Testis (tissue), 5 donors: ENCODE measurements at regions of chr12 and their contacts with region 1.

Region 1: DNA sequence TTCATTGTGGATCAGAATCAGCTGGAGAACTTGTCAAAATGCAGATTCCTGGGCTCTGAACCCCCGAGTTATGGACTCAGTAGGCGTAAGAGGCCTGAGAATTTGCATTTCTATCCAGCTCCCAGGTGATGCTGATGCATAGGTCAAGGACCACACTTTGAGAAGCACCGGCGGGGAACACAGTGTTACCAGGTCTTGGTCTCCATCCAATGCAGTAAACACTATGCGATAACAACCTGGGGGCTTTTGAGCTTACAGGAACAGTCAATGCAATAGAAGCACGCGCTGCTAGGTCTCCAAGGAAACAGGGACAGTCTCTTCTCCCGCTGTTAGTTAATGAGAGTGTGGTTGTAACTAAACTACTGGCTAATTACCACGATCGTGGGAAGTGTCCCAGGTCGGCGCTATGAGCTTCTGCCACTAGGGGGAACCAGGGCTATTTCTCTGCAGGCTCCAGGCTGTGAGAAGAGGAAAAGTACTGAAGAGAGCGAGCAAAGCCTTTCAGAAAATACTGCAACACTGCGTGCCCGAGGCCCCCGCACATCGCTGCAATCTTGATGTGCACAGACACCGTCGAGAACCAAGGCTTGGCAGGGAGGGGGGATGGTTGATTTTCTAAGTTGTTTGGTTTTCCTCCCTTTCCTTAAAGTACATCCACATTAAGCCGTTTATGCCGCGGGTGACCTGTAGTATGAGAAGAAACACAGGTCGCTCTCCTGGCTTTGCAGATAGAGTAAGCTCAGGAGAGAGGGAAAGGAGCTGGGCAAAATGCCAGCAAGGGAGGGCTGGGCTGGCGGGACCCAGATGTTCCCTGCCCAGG is 52.0 kb upstream of the KCNA1 start:
- DNase-seq: peak; percentile 86
- H3K4me3 ChIP-seq: no peak overlapping the region
- H3K27ac ChIP-seq: no peak overlapping the region
- H3K4me1 ChIP-seq: peaks cover 6% of the 10 kb centered on the region
- H3K27me3 ChIP-seq: no peaks in the 10 kb centered on the region
- CTCF ChIP-seq: peak; percentile 56 to 88 (median 69)
- POLR2A ChIP-seq: no peak

Region 2: DNA sequence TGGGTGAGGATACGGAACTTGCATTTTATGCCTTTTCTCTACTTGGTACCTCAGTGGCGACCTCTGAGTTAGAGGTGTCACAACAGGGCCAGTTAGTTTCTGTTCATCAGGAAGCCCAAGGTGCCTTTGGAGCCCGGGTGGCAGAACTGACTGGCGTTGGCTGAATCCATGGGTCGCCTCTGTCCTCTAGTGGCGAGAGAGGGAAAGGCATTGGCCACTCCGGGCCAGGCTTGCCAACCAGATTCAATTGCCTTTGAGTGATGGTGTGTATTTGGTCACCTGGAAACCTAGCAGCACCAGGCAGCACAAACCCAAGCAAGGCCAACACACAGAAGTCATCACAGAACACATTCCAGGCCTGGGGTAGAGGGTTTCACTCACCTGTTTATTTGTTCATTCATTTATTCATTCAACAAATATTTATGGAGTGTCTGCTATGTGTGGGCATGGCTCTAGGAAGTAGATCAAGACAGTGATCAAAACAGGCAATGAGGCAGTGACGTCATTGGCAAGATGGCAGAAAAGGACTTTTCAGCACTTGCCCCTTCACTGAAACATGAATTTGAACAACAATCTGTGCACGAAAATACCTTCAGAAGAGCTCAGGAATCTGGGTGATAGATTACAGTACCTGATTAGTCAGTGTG is 145.5 kb after region 1 on chr12:
- intact Hi-C with region 1: loop called (anchors 5 kb)
- DNase-seq: peak; percentile 75
- H3K4me3 ChIP-seq: no peak overlapping the region
- H3K27ac ChIP-seq: no peak overlapping the region
- H3K4me1 ChIP-seq: no peaks in the 10 kb centered on the region
- H3K27me3 ChIP-seq: no peaks in the 10 kb centered on the region
- CTCF ChIP-seq: peak; percentile 56 to 88 (median 73)
- POLR2A ChIP-seq: no peak